ENCODE measurements at regions of chr2 and their contacts with region 1.

Region 1: GRCh38 chr2:120223034-120223912 is at the start of gene TMEM185B:
- DNase-seq: peak; percentile 96 to 98
- H3K4me3 ChIP-seq: peak within 1 kb of the TSS; percentile 76
- H3K4me3 Mint-ChIP-seq: peak within 1 kb of the TSS; percentile 97
- H3K27ac Mint-ChIP-seq: peak within 1 kb of the TSS; percentile 96
- H3K4me1 ChIP-seq: peaks cover 23% of the 10 kb centered on the region
- H3K4me1 Mint-ChIP-seq: peaks cover 17% of the 10 kb centered on the region
- H3K27me3 ChIP-seq: no peaks in the 10 kb centered on the region
- H3K27me3 Mint-ChIP-seq: no peaks in the 10 kb centered on the region
- CTCF ChIP-seq: peak; percentile 54 to 77
- total RNA-seq, gene TMEM185B: 67.3 and 69.9 TPM in 2 replicates

Region 2: DNA sequence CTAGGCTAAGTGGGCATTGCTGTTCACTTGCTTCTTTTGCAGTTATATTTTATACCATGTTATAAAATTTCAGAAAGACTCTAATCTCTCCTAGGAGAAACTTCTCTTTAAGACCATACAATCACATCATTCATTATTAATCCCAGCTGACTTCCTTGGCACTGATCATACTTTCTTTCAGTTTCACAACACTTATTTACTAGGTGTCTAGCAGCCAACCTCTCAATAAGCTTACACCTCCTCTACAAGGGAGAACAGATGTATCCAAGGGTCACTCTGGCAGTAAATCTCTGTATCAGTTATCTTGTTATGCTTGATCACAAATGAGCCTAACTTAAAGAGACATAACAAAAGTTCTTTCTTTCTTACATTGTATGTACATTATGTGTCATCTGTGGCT is 280.2 kb before region 1 on chr2:
- CTCF ChIA-PET with region 1: no interaction called
- POLR2A ChIA-PET with region 1: no interaction called
- intact Hi-C with region 1: no loop called
- DNase-seq: no peak
- H3K4me3 ChIP-seq: no peak overlapping the region
- H3K4me3 Mint-ChIP-seq: no peak overlapping the region
- H3K27ac Mint-ChIP-seq: no peak overlapping the region
- H3K4me1 ChIP-seq: no peaks in the 10 kb centered on the region
- H3K4me1 Mint-ChIP-seq: no peaks in the 10 kb centered on the region
- H3K27me3 ChIP-seq: no peaks in the 10 kb centered on the region
- H3K27me3 Mint-ChIP-seq: no peaks in the 10 kb centered on the region
- CTCF ChIP-seq: no peak

Region 3: DNA sequence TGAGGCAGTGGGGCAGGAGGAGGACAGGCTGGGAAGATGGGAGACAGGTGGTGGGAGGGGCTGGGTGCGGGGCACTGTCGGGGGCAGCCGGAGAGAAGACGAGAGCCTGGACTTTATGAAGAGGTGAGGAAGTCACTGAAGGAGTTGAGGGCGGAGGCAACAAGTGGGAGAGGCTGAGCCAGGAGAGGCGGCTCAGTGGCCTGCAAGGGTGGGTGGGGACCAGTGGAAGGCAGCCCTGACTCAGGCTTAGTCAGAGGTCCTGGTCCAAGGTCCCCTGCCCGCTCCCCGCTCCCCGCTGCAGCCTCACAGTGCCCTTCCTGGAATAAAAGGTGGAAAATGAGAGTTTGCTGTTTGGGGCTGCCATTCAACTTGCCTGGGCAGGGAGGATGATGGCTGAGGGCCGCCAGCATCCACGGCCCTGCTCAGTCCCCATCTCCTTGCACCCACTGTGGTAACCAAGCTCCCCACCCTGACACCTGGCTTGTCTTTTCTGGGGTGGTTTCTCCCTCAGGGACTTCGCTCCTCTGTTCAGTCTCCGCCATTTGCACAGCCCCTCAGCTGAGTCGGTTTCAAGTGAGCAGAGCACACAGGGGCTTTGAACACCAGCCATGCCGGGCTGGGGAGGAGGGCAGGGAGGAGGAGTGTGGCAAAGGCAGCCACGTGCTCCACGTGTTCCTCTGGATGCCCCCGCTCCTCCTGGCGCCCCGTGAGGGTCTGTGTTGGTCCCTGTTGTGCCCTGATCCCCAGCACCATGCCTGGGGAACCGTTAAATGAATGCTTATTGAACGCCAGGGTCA is 15.6 kb after region 1 on chr2:
- CTCF ChIA-PET with region 1: no interaction called
- POLR2A ChIA-PET with region 1: interaction called, 4 read pairs
- intact Hi-C with region 1: loop called (anchors 1 kb)
- DNase-seq: peak; percentile 59 to 89
- H3K4me3 ChIP-seq: no peak overlapping the region
- H3K4me3 Mint-ChIP-seq: peak overlapping the region; percentile 42
- H3K27ac Mint-ChIP-seq: peak overlapping the region; percentile 52
- H3K4me1 ChIP-seq: peaks cover 37% of the 10 kb centered on the region
- H3K4me1 Mint-ChIP-seq: peaks cover 29% of the 10 kb centered on the region
- H3K27me3 ChIP-seq: no peaks in the 10 kb centered on the region
- H3K27me3 Mint-ChIP-seq: no peaks in the 10 kb centered on the region
- CTCF ChIP-seq: no peak

Region 4: GRCh38 chr2:120245354-120245791 is 22.1 kb after region 1 on chr2:
- CTCF ChIA-PET with region 1: interaction called, 7 read pairs
- POLR2A ChIA-PET with region 1: interaction called, 35 read pairs
- intact Hi-C with region 1: loop called (anchors 1 kb)
- DNase-seq: peak; percentile 97 to 99
- H3K4me3 ChIP-seq: no peak overlapping the region
- H3K4me3 Mint-ChIP-seq: peak overlapping the region; percentile 55
- H3K27ac Mint-ChIP-seq: peak overlapping the region; percentile 93
- H3K4me1 ChIP-seq: peaks cover 32% of the 10 kb centered on the region
- H3K4me1 Mint-ChIP-seq: peaks cover 27% of the 10 kb centered on the region
- H3K27me3 ChIP-seq: no peaks in the 10 kb centered on the region
- H3K27me3 Mint-ChIP-seq: no peaks in the 10 kb centered on the region
- CTCF ChIP-seq: no peak

Region 5: GRCh38 chr2:120261387-120262006 is 38.2 kb after region 1 on chr2:
- CTCF ChIA-PET with region 1: no interaction called
- POLR2A ChIA-PET with region 1: no interaction called
- intact Hi-C with region 1: no loop called
- DNase-seq: no peak
- H3K4me3 ChIP-seq: no peak overlapping the region
- H3K4me3 Mint-ChIP-seq: no peak overlapping the region
- H3K27ac Mint-ChIP-seq: no peak overlapping the region
- H3K4me1 ChIP-seq: no peaks in the 10 kb centered on the region
- H3K4me1 Mint-ChIP-seq: peaks cover 12% of the 10 kb centered on the region
- H3K27me3 ChIP-seq: no peaks in the 10 kb centered on the region
- H3K27me3 Mint-ChIP-seq: no peaks in the 10 kb centered on the region
- CTCF ChIP-seq: no peak